ENCODE measurements at regions of chr4 and their contacts with region 1.

Region 1: GRCh38 chr4:40811956-40812355 is 62.2 kb downstream of the NSUN7 start:
- DNase-seq: no peak
- H3K4me3 ChIP-seq: no peak overlapping the region
- H3K27ac ChIP-seq: peak overlapping the region in 31 of 59 donors; percentile 0 to 73 (median 30)
- H3K27me3 ChIP-seq: no peaks in the 10 kb centered on the region
- CTCF ChIP-seq: no peak

Region 2: DNA sequence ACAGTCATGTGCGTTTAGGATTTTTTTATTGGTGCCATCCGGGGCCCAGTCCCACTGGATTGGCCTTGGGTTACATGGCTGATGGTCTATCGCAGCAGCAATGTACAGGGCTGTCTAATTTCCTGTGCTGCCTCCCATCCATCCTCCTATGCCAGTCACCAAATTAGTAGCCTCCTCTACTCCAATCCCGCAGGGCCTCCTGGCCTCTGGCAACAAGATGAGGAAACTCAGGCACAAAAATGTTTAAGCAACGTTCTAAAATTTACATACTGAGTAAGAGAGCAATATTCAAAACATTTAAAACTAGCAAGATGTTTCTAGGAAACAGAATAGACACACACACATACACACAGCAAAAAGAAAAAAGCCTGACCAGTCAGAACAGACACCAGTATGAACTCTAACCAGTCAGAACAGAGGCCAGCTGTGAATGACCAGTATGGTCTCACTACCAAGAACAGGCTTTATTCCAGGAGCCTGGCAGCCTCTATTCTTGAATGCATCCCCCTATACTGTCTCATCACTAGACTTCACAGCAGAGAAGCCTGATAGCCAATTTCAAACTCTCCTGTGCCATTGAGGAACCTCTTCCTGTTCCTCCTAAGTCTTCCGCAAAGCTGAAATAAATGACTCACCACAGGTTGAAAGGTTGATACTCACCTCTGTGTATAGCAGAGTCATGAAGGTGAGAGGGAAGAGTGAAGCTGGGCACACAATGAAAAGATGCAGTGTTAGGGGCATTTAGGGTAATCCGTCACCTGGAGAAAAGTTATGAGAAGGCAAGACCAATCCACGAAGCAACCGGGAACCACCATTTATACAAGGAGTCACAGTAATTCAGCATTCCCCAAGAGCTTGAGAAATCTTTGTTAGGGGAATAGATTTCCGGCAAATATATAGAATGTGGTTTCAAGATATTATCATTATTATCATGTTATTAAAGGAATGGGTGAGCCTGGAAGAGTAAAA is 434.1 kb before region 1 on chr4:
- intact Hi-C with region 1: no loop called
- DNase-seq: no peak
- H3K4me3 ChIP-seq: no peak overlapping the region
- H3K27ac ChIP-seq: no peak overlapping the region
- H3K27me3 ChIP-seq: no peaks in the 10 kb centered on the region
- CTCF ChIP-seq: no peak

Region 3: GRCh38 chr4:40755616-40756015 is 56.3 kb before region 1 on chr4:
- intact Hi-C with region 1: loop called in 1 of 2 experiments (anchors 2 kb)
- DNase-seq: no peak
- H3K4me3 ChIP-seq: no peak overlapping the region
- H3K27ac ChIP-seq: no peak overlapping the region
- H3K27me3 ChIP-seq: peaks cover 0 to 16% (median 3%) of the 10 kb centered on the region in 45 donors
- CTCF ChIP-seq: no peak

Region 4: DNA sequence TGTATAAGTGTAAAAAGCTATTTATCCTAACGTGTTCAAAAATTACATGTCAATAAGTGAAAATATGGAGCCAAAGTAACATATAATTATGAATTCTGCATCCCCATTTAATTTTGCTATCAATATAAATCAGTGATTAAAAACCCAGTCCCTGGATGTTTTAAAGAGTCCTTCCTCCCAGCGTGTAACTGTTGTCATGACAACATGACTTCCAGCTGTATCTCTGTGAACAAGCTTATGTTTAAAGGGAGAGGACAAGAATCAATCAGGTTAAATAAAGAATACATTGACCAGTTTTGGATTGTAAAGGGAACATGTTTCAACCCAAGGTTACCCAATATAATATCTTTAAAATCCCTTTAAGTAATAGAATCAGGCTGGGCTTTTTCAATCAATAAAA is 157.5 kb after region 1 on chr4:
- intact Hi-C with region 1: no loop called
- DNase-seq: no peak
- H3K4me3 ChIP-seq: no peak overlapping the region
- H3K27ac ChIP-seq: no peak overlapping the region
- H3K27me3 ChIP-seq: no peaks in the 10 kb centered on the region
- CTCF ChIP-seq: no peak